Prostate gland (tissue), 2 donors: ENCODE measurements at regions of chrX and their contacts with region 1.

Region 1: GRCh38 chrX:14528629-14529289 is 577 bp upstream of the GLRA2 start:
- DNase-seq: peak; percentile 20
- H3K4me3 ChIP-seq: no peak overlapping the region
- H3K27ac ChIP-seq: no peak overlapping the region
- H3K4me1 ChIP-seq: no peaks in the 10 kb centered on the region
- H3K27me3 ChIP-seq: no peaks in the 10 kb centered on the region
- CTCF ChIP-seq: peak in 1 of 4 experiments; percentile 33
- POLR2A ChIP-seq: no peak

Region 2: GRCh38 chrX:13790206-13791131 is 738.3 kb before region 1 on chrX:
- intact Hi-C with region 1: no loop called
- DNase-seq: no peak
- H3K4me3 ChIP-seq: no peak overlapping the region
- H3K27ac ChIP-seq: peak overlapping the region in 1 of 2 donors; percentile 69
- H3K4me1 ChIP-seq: no peaks in the 10 kb centered on the region
- H3K27me3 ChIP-seq: no peaks in the 10 kb centered on the region
- CTCF ChIP-seq: no peak
- POLR2A ChIP-seq: no peak

Region 3: GRCh38 chrX:14124562-14124961 is 404.2 kb before region 1 on chrX:
- intact Hi-C with region 1: loop called (anchors 10 kb)
- DNase-seq: no peak
- H3K4me3 ChIP-seq: no peak overlapping the region
- H3K27ac ChIP-seq: no peak overlapping the region
- H3K4me1 ChIP-seq: no peaks in the 10 kb centered on the region
- H3K27me3 ChIP-seq: no peaks in the 10 kb centered on the region
- CTCF ChIP-seq: no peak
- POLR2A ChIP-seq: no peak

Region 4: DNA sequence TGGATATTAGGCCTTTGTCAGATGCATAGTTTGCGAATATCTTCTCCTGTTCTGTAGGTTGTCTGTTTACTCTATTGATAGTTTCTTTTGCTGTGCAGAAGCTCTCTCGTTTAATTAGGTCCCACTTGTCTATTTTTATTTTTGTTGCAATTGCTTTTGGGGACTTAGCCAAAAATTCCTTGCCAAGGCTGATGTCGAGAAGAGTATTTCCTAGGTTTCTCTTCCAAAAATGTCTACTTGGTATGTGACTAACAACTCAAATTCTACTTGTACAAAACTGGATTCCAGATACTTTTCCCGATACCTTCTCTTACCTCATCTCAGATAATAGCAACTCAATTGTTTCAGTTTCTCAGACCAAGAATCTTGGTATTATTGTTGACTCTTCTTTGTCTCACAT is 141.8 kb before region 1 on chrX:
- intact Hi-C with region 1: no loop called
- DNase-seq: no peak
- H3K4me3 ChIP-seq: no peak overlapping the region
- H3K27ac ChIP-seq: no peak overlapping the region
- H3K4me1 ChIP-seq: no peaks in the 10 kb centered on the region
- H3K27me3 ChIP-seq: no peaks in the 10 kb centered on the region
- CTCF ChIP-seq: no peak
- POLR2A ChIP-seq: no peak